Dorsolateral prefrontal cortex (tissue), 120 donors: ENCODE measurements at regions of chrX and their contacts with region 1.

Region 1: DNA sequence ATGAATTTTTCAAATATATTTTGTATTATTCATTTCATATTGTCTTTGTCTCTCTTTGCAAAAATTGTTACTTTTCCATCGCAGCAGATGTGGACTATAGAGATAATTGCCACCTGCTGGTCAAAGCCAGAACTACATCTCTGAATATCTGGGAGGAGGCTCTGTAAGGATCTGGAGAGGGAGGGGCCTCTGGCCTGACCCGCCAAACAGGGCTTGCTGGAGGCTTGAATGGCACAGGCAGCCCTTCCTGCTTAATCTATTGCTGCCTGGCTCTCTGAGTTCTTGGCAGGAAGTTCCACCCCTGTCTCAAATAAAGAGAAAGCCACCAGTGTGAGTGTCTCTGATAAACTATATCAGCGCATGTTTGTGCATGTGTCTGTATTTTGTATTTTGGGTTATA is 132.4 kb downstream of the ZMAT1 start:
- DNase-seq: peak; percentile 28 to 84 (median 70)
- H3K4me3 ChIP-seq: peak overlapping the region in 34 of 59 donors; percentile 0 to 46 (median 25)
- H3K27ac ChIP-seq: no peak overlapping the region
- H3K27me3 ChIP-seq: peaks cover 0 to 35% (median under 1%) of the 10 kb centered on the region in 45 donors
- CTCF ChIP-seq: peak; percentile 66 to 93 (median 82)

Region 2: GRCh38 chrX:100964362-100964761 is 835.0 kb before region 1 on chrX:
- intact Hi-C with region 1: no loop called
- DNase-seq: no peak
- H3K4me3 ChIP-seq: no peak overlapping the region
- H3K27ac ChIP-seq: no peak overlapping the region
- H3K27me3 ChIP-seq: peaks cover 0 to 37% (median 2%) of the 10 kb centered on the region in 45 donors
- CTCF ChIP-seq: no peak

Region 3: DNA sequence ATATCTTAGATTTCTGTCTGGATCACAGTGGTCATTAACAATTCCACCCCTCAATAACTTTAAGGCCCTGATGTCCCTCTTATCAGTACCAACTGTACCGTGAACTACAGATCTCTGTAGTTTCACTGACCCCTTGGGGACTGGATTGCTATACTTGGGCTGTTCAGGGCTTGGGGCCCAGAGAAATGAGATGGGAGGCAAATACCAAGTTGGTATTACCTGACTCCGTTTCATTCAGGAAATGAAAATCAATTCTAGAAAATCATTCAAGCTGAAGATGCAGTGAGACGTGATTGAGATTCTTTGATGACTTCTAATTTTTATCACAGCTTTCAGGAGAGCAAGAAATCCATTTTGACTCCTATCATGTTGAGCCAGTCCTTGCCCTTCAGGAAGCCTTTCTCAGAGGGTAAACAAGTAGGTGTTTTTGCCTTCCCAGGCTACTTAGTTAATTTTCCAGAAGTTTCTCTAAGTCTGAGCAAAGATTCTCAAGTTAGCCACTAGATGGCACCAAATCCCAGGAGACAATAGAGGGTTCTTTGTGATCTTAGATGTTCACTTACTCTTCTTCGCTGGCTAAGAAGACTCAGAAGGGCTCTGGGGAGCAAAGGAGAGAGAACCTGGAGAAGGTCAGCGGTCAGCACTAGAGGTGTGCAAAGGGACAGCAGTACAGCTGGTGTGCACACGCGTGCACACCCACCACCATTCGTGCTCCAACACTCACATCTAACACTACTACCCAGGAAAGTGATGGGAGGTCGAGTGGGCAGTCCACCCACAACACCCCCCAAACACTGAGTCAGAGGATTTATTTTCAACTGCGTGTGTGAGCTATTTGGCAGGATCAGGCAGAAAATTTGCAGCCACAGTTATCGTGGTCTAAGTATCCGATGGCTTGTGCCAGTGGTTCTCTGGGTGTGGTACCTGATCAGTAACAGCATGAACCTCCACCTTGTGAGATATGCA is 383.9 kb before region 1 on chrX:
- intact Hi-C with region 1: loop called (anchors 5 kb)
- DNase-seq: peak in 1 of 10 donors; percentile 25
- H3K4me3 ChIP-seq: peak overlapping the region in 4 of 59 donors; percentile 4 to 30 (median 16)
- H3K27ac ChIP-seq: peak overlapping the region; percentile 63 to 99 (median 90)
- H3K27me3 ChIP-seq: peaks cover 0 to 79% (median 29%) of the 10 kb centered on the region in 45 donors
- CTCF ChIP-seq: peak; percentile 35 to 91 (median 81)

Region 4: GRCh38 chrX:101595739-101596419 is 203.5 kb before region 1 on chrX:
- intact Hi-C with region 1: loop called (anchors 5 to 10 kb)
- DNase-seq: peak in 1 of 10 donors; percentile 7
- H3K4me3 ChIP-seq: no peak overlapping the region
- H3K27ac ChIP-seq: no peak overlapping the region
- H3K27me3 ChIP-seq: peaks cover 0 to 64% (median 33%) of the 10 kb centered on the region in 45 donors
- CTCF ChIP-seq: peak; percentile 37 to 79 (median 62)

Region 5: DNA sequence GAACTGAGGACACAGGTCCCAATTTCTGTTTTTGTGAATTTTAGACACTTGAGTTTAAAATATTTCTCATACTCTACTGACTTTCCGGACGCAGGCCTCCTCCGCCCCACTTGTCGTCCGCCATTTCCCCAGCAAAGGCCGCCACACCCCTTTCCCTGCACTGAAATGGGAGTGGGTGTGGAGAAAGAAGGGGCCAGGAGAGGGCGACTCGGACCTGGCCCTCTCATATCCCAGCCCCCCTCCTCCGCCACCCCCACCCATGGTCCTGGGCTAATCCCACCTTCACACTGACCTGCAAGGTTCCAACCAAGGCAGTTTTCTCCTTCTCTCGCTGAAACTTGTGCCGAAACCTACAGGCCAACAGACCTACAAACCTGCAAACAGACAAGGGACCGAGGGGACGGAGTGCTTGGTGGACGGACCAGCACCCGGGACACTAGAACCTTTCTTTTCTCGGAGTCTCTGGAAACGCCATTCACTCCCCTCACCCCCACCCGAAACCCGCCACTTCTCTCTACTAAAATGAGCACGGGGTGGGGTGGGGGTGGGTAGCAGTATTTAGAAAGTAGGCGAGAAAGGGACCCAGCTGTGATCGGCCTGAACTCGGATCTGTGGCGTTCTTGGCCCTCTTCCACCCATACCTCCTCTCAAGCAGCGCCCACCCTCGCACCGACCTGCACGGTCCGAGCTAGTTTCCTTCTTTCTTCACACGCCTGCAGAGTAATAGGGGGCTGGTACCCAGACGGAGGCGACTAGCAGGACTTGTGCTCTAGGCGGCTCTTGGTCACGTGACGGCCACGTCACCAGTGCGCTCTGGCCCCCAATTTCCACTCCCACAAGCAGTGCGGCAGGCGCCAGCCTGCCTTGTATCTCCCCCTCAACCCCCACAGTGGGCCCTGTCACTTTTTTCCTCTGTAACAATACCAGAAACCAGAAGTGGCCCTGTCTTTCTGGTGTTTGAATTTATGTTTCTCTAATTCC is 181.9 kb before region 1 on chrX and contains the start of gene ARMCX6:
- intact Hi-C with region 1: loop called in 1 of 2 experiments (anchors 5 kb)
- DNase-seq: peak; percentile 75 to 87 (median 82)
- H3K4me3 ChIP-seq: peak within 1 kb of the TSS; percentile 25 to 83 (median 68)
- H3K27ac ChIP-seq: peak within 1 kb of the TSS in 55 of 59 donors; percentile 8 to 89 (median 74)
- H3K27me3 ChIP-seq: peaks cover 0 to 45% (median 9%) of the 10 kb centered on the region in 45 donors
- CTCF ChIP-seq: peak in 52 of 56 donors; percentile 13 to 63 (median 43)
- total RNA-seq, gene ARMCX6: 14.4 to 32.3 (median 23.9) TPM

Region 6: DNA sequence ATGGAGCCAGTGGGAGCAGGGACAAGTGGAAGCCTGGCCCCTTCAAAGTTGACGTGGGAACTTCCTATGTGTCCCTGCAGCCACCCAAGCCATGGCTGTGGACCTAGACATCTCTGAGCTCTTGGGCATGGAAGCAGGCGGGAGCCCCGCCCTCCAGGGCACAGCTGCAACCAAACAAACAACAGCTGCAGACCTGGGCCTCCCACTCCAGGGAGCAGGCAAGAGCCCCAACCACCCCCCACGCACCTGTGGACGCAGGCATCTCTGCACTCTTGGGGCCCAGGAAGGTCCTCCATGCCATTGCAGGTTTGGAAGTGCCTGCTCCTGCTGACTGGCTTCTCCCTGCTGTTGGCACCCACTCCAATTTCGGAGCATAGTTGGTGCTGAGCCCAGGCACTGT is 13.8 kb after region 1 on chrX:
- intact Hi-C with region 1: no loop called
- DNase-seq: no peak
- H3K4me3 ChIP-seq: no peak overlapping the region
- H3K27ac ChIP-seq: no peak overlapping the region
- H3K27me3 ChIP-seq: peaks cover 0 to 36% (median 7%) of the 10 kb centered on the region in 45 donors
- CTCF ChIP-seq: no peak

Region 7: DNA sequence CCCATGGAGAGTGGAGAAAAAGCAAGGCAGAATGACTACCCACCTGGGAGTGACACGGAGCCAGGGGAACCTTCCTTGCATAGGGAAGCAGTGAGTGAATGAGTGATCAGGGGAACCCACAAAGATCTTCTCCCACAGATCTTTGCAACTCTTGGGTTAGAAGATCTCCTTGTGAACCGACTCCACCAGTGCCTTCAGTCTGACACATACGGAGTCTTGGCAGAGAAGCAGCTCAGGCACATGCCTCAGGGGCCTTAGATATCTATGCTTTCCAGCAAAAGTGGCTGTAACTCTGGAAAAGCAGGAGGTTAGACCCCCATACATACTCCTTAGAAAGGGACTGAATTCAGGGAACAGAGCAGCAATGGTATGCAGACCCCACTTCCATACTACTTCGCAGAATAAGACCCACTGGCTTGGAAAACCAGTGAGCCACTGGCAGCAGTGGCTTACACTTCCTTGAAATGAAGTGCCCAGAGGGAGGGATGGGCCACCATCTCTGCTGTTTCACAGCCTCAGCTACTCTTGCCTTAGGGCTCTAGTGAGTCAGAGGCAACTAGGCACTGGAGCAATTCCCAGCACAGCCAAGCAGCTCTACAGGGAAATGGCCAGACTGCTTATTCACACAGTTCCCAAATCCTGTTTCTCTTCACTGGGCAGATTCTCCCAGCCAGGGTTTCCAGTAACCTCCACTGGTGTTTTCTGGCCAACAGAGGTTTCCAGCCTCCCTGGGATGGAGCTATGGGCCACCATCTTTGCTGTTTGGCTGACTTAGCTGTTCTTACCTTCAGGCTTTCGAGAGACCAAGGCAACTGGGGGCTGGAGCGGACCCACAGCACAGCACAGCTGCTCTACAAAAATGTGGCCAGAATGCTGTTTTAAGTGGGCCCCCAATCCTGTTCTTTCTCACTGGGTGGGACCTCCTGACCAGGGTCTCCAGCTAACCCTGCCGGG is 243.3 kb after region 1 on chrX:
- intact Hi-C with region 1: no loop called
- DNase-seq: no peak
- H3K4me3 ChIP-seq: no peak overlapping the region
- H3K27ac ChIP-seq: no peak overlapping the region
- H3K27me3 ChIP-seq: peaks cover 0 to 32% (median 3%) of the 10 kb centered on the region in 45 donors
- CTCF ChIP-seq: no peak